ENCODE measurements at regions of chr22 and their contacts with region 1.

Region 1: DNA sequence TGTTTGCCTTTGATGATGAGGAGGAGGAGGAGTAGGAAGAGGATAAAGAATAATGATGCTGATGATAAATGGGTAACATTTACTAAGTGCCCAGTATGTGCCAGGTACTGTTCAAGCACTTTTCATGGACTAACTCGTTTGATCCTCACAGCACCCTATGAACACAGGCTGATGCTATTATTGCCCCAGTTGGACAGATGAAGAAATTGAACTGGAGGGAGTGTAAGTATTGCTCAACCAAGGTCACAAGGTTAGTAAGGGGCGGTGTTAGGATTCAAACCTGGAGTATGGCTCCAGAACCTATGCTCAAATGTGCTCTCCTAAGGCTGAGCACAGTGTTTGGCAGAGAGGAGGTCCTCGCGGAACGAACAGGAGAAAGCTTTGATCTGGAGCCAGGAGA is 78.6 kb downstream of the SYN3 start:
- DNase-seq: no peak
- ATAC-seq: no peak
- H3K4me3 ChIP-seq: no peak overlapping the region
- H3K27ac ChIP-seq: no peak overlapping the region
- H3K4me1 ChIP-seq: no peaks in the 10 kb centered on the region
- H3K27me3 ChIP-seq: peaks cover 0 to 4% of the 10 kb centered on the region in 2 experiments; a peak in 2 of 5 replicates
- CTCF ChIP-seq: no peak
- EP300 ChIP-seq: no peak
- POLR2A ChIP-seq: no peak
- RAD21 ChIP-seq: no peak

Region 2: DNA sequence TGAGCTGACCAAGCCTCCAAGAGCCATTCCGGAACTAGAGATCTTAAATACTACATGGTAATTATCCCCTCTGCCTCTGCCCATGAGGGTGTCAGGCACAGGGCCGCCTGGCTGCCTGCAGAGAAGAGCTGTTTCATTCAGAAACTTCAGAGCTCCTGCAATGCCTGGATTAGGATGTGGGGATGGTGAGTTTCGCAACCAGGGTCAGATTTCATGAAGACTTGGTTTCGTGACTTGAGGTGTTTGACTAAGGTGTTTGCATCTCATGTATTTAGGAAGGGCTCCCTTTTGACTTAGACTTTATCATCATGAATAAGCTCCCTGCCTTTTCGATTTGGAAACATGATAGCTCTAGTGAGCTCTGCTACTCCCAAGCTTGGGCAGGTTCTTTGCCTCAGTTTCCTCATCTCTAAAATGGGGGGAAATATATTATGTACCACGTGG is 169.0 kb before region 1 on chr22:
- CTCF ChIA-PET with region 1: no interaction called
- POLR2A ChIA-PET with region 1: no interaction called
- in situ Hi-C with region 1: loop called (anchors 10 kb)
- intact Hi-C with region 1: loop called (anchors 10 kb)
- DNase-seq: no peak
- ATAC-seq: no peak
- H3K4me3 ChIP-seq: no peak overlapping the region
- H3K27ac ChIP-seq: no peak overlapping the region
- H3K4me1 ChIP-seq: no peaks in the 10 kb centered on the region
- H3K27me3 ChIP-seq: peaks cover 0 to 5% of the 10 kb centered on the region in 2 experiments; a peak in 1 of 5 replicates
- CTCF ChIP-seq: no peak
- EP300 ChIP-seq: no peak
- POLR2A ChIP-seq: no peak
- RAD21 ChIP-seq: no peak